Mammary epithelial cell (primary cell): ENCODE measurements at regions of chr1 and their contacts with region 1.

Region 1: DNA sequence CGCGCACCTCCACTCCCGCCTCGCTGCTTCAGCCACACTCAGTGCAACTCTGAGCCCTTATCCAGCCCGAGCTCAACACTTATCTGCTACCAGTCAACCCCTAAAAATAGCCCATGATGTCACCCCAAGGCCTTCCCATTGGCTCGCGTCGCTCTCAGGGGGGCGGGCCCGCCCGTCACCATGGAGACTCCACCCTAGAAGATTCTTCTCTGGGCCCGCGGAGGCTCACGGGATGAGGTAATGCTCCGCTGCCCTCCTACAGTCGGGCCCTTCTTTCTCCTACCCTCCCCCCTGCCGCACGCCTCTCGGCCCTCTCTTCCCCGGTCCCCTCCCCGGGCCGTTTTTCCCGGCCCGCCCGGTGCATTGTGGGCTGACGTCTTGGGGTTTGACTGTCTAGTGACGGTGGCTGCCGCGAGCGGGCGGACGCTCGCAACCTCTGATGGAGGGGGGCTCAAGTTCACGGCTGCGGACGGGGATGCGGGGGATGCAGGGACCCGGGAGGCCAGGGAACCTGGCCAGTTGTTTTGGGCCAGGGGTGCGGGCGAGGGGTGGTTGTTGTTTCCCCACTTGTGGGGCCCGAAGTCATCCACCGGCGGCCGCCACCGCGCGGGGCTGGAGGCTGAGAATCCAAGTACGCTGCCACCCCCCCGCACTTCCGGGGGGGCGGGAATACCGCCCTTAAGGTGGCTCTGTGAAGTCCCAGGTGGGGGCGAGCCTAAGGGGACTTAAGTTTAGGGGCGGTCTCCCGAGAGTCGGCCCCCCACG is at the start of gene JUN:
- DNase-seq: peak; percentile 99
- H3K4me3 ChIP-seq: peak within 1 kb of the TSS; percentile 91 to 96 (median 93)
- H3K27ac ChIP-seq: peak within 1 kb of the TSS; percentile 98
- H3K4me1 ChIP-seq: peaks cover 13% of the 10 kb centered on the region
- H3K27me3 ChIP-seq: no peaks in the 10 kb centered on the region
- CTCF ChIP-seq: peak in 1 of 2 donors; percentile 19
- total RNA-seq, gene JUN: 61.1 to 78.7 TPM

Region 2: DNA sequence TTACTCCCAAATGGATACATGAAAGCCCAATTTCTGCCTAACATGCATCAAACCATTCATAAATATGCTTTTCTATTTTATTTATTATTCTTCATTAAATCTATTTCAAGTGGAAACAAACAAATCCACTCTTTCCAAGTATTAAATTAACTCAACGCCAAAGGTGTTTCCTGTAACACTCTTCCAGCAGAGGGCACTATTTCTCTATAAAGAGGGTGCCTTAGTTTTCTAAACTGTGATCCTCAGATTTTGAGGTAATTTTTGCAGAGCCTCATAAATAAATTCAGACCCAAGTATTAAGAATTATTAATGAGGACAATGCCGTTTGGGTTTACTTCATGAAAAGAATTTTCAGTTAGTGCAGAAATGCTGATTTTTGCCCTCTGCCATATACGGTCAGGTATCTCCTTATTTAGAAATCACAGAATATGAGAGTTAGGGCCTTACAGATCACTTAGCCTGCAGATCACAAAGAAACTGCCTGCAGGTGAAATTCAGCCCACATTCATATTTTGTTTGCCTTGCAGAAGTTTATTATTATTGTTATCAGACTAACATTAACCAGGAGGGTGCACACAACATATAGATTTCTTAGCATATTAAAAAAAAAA is 44.2 kb before region 1 on chr1:
- CTCF ChIA-PET with region 1: no interaction called
- dilution Hi-C with region 1: loop called (anchors 5 kb)
- in situ Hi-C with region 1: no loop called
- intact Hi-C with region 1: loop called (anchors 1 kb)
- DNase-seq: peak; percentile 41
- H3K4me3 ChIP-seq: no peak overlapping the region
- H3K27ac ChIP-seq: no peak overlapping the region
- H3K4me1 ChIP-seq: peaks cover 13% of the 10 kb centered on the region
- H3K27me3 ChIP-seq: no peaks in the 10 kb centered on the region
- CTCF ChIP-seq: peak; percentile 70 to 75

Region 3: GRCh38 chr1:58848818-58849411 is 64.7 kb after region 1 on chr1:
- CTCF ChIA-PET with region 1: no interaction called
- dilution Hi-C with region 1: loop called (anchors 5 kb)
- in situ Hi-C with region 1: loop called in 1 of 2 experiments (anchors 10 kb)
- intact Hi-C with region 1: loop called (anchors 1 kb)
- DNase-seq: peak; percentile 100
- H3K4me3 ChIP-seq: no peak overlapping the region
- H3K27ac ChIP-seq: peak overlapping the region; percentile 76
- H3K4me1 ChIP-seq: peaks cover 35% of the 10 kb centered on the region
- H3K27me3 ChIP-seq: no peaks in the 10 kb centered on the region
- CTCF ChIP-seq: peak in 1 of 2 donors; percentile 34

Region 4: GRCh38 chr1:58932859-58933598 is 148.9 kb after region 1 on chr1:
- CTCF ChIA-PET with region 1: no interaction called
- dilution Hi-C with region 1: no loop called
- in situ Hi-C with region 1: no loop called
- intact Hi-C with region 1: loop called (anchors 1 kb)
- DNase-seq: peak; percentile 98
- H3K4me3 ChIP-seq: no peak overlapping the region
- H3K27ac ChIP-seq: peak overlapping the region; percentile 91
- H3K4me1 ChIP-seq: peaks cover 52% of the 10 kb centered on the region
- H3K27me3 ChIP-seq: no peaks in the 10 kb centered on the region
- CTCF ChIP-seq: no peak

Region 5: DNA sequence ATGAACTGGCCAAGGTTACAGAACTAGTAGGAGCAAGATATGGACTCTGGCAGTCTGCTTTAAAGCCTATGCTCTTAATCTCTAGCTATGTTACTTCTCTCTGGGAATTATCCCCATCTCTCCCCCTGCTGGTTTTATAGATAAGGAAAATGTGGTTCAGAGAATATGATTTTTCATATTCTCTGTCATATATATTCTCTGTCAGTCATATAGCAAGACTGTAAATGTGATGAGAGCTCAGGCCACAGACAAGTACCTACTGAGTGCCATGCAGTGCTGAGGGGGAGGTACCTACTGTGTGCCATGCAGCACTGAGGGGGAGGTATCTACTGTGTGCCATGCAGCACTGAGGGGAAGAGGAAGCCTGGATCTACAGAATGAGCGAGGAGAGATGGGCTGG is 292.4 kb after region 1 on chr1:
- CTCF ChIA-PET with region 1: no interaction called
- dilution Hi-C with region 1: no loop called
- in situ Hi-C with region 1: no loop called
- intact Hi-C with region 1: loop called (anchors 1 kb)
- DNase-seq: no peak
- H3K4me3 ChIP-seq: no peak overlapping the region
- H3K27ac ChIP-seq: no peak overlapping the region
- H3K4me1 ChIP-seq: peaks cover 11% of the 10 kb centered on the region
- H3K27me3 ChIP-seq: no peaks in the 10 kb centered on the region
- CTCF ChIP-seq: peak; percentile 13 to 33

Region 6: DNA sequence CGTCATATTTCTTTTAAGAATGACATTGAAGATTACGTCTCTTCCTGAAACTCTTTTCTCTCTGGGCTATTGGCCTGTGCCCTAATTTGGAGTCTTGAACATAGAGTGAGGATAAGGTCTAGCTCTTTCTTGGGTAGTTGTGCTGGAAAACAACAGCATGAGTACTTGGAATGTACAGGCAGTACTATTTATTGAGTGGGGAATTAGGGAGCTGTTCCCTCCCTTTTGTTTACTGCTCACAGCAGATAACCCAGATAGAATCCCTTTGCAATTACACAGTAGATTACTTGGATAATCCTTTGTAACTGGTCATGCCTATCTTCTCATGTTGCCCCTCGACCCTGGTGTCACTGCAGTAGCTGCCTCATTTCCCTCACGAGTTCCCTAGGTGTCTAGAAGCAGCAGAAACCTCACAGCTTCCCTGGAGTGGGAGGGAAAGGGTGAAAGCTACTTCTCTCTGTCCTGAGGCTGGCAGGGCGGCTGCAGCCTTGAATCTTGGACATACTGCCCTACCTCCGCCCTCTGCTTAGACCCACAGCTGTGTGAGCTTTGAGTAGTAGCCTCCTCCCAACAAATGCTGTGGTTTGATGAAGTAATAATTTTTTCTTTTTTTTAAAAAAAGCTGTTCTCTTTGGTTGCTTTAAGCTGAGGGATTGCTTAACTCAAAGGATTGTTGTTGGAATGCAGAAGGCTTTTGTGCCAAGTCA is 583.3 kb after region 1 on chr1:
- CTCF ChIA-PET with region 1: no interaction called
- dilution Hi-C with region 1: no loop called
- in situ Hi-C with region 1: no loop called
- intact Hi-C with region 1: loop called (anchors 10 kb)
- DNase-seq: peak; percentile 62
- H3K4me3 ChIP-seq: no peak overlapping the region
- H3K27ac ChIP-seq: peak overlapping the region; percentile 28
- H3K4me1 ChIP-seq: peaks cover 20% of the 10 kb centered on the region
- H3K27me3 ChIP-seq: no peaks in the 10 kb centered on the region
- CTCF ChIP-seq: no peak

Region 7: DNA sequence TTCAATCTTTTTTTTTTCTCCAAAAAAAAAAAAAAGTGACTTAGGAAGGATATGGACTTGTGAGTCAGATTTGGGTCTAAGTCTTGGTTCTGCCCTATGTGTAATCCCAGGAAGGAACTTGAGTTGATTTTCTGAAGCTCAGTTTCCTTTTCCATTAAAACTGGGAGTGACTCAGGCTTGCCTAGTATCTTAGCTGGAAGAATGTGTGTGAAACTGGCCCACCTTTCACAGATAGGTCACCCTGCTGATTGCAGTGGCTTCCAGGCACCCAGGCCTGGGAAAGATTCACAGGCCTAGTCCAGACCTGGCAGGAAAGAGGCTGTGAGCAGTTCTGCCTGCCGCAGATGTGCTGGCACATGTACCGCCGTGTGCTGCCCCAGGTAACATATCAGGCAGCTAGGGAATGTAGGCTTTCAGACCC is 812.3 kb after region 1 on chr1:
- CTCF ChIA-PET with region 1: no interaction called
- dilution Hi-C with region 1: no loop called
- in situ Hi-C with region 1: no loop called
- intact Hi-C with region 1: loop called (anchors 10 kb)
- DNase-seq: peak; percentile 98
- H3K4me3 ChIP-seq: no peak overlapping the region
- H3K27ac ChIP-seq: peak overlapping the region; percentile 87
- H3K4me1 ChIP-seq: peaks cover 38% of the 10 kb centered on the region
- H3K27me3 ChIP-seq: no peaks in the 10 kb centered on the region
- CTCF ChIP-seq: no peak